Right lobe of liver (tissue), 6 donors: ENCODE measurements at regions of chr11 and their contacts with region 1.

Region 1: DNA sequence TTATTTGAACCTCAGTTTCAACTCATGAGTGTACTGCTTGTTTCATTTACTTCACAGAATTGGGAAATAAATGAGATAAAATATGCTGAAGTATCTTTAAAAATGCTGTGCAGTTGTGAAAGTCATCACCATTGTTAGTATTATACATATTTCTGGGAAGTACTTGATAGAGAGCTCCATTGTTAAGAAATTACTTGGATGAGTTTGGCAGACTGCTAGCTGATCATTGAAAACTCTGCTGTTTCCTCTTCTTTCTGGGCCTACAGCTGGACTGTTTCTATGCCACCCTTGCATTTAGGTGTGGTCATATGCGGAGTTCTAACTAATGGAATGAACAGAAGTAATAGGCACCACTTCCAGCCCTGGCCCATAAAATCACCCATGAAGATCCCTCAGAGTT is 10.0 kb downstream of the SIK2 start:
- DNase-seq: no peak
- ATAC-seq: peak in 3 of 4 donors; percentile 26 to 32 (median 32)
- H3K4me3 ChIP-seq: no peak overlapping the region
- H3K27ac ChIP-seq: no peak overlapping the region
- H3K4me1 ChIP-seq: peaks cover 0 to 20% (median 4%) of the 10 kb centered on the region in 4 donors
- H3K27me3 ChIP-seq: no peaks in the 10 kb centered on the region
- CTCF ChIP-seq: no peak
- POLR2A ChIP-seq: no peak

Region 2: DNA sequence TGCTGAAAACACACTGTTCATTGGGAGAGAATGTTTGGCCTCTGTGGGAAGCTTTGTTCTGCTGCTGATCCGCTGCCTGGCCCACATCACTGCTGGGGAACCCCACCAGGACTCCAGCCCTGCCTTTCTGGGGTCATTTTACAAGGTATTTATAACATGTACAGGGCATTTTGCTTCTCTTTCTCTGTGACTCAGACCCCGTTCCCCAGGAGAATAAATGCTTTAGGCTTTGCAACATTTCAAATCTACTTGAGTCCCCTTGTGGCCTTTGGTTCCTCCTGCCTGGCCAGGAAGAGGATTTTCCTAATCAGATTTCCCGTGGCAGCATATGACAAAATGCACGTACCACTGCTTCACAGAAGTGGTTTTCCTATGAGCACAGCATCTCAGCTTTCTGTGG is 143.0 kb before region 1 on chr11:
- intact Hi-C with region 1: no loop called
- DNase-seq: no peak
- ATAC-seq: peak in 1 of 4 donors; percentile 34
- H3K4me3 ChIP-seq: no peak overlapping the region
- H3K27ac ChIP-seq: no peak overlapping the region
- H3K4me1 ChIP-seq: no peaks in the 10 kb centered on the region
- H3K27me3 ChIP-seq: no peaks in the 10 kb centered on the region
- CTCF ChIP-seq: no peak
- POLR2A ChIP-seq: no peak

Region 3: DNA sequence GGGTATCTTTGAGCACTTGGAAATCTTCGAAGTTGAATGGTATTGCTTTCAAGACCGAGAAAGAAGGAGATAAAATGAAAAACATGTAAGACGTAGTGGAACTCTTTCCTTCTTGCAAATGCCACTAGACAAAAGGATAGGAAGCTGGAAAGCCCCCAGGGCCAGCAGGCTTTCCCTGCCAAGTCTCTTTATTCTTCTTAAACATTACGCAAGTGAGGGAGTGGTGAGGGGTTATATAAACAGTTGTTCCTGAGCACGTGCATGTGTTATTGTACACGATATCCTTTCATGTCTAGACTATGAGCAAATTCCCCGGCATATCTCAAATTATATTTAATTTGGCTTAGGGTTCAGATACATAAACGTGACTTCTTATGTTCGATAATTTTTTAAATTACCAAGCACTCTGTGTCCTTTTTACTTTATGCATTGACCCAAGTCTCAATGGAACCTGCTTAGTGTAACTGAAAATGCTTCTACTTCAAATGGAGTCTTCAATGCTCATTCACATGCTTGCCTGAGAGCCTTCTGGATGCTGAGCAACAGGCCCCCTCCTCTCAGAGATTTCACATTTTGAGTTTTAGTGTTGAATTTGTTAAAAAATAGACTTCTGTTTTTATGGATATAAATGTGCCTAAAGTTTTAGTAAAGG is 94.9 kb after region 1 on chr11:
- intact Hi-C with region 1: loop called (anchors 10 kb)
- DNase-seq: peak in 2 of 3 donors; percentile 65 to 67
- ATAC-seq: peak; percentile 82 to 87 (median 84)
- H3K4me3 ChIP-seq: no peak overlapping the region
- H3K27ac ChIP-seq: peak overlapping the region in 2 of 3 donors; percentile 35 to 39
- H3K4me1 ChIP-seq: peaks cover 0 to 14% (median 0%) of the 10 kb centered on the region in 4 donors
- H3K27me3 ChIP-seq: no peaks in the 10 kb centered on the region
- CTCF ChIP-seq: no peak
- POLR2A ChIP-seq: no peak